PC-3 (cell line): ENCODE measurements at regions of chr13 and their contacts with region 1.

Region 1: DNA sequence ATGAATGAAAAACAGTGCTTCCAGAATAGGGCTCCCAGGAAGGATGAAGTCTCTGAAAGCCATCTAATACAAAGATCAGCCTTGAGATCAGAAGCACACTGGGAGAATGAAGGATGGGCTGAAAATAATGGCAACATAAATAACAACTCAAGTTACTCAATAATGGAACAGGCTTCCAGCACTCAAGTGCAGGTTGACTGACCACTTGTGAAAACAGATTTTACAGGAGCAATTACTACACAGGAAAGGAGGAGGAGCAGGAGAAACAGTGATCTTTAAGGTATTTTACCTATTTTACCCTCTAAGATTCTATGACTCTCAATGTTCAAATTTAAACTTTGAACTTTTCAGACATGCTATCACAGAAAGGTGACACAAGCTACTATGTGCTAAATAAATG is 106.0 kb downstream of the USP12 start:
- DNase-seq: no peak
- ATAC-seq: no peak
- H3K4me3 ChIP-seq: no peak overlapping the region
- H3K27ac ChIP-seq: no peak overlapping the region
- H3K4me1 ChIP-seq: no peaks in the 10 kb centered on the region
- H3K27me3 ChIP-seq: no peaks in the 10 kb centered on the region
- CTCF ChIP-seq: no peak

Region 2: GRCh38 chr13:25901460-25902376 is 1163.9 kb before region 1 on chr13:
- CTCF ChIA-PET with region 1: no interaction called
- POLR2A ChIA-PET with region 1: no interaction called
- intact Hi-C with region 1: no loop called
- DNase-seq: peak; percentile 96
- ATAC-seq: peak; percentile 88
- H3K4me3 ChIP-seq: peak overlapping the region; percentile 15; the same call in 1 of the 2 replicates
- H3K27ac ChIP-seq: peak overlapping the region; percentile 88
- H3K4me1 ChIP-seq: peaks cover 37% of the 10 kb centered on the region
- H3K27me3 ChIP-seq: no peaks in the 10 kb centered on the region
- CTCF ChIP-seq: no peak

Region 3: GRCh38 chr13:26518451-26518959 is 547.1 kb before region 1 on chr13:
- CTCF ChIA-PET with region 1: no interaction called
- POLR2A ChIA-PET with region 1: no interaction called
- intact Hi-C with region 1: no loop called
- DNase-seq: no peak
- ATAC-seq: no peak
- H3K4me3 ChIP-seq: no peak overlapping the region
- H3K27ac ChIP-seq: no peak overlapping the region
- H3K4me1 ChIP-seq: no peaks in the 10 kb centered on the region
- H3K27me3 ChIP-seq: peaks cover 48% of the 10 kb centered on the region
- CTCF ChIP-seq: no peak

Region 4: DNA sequence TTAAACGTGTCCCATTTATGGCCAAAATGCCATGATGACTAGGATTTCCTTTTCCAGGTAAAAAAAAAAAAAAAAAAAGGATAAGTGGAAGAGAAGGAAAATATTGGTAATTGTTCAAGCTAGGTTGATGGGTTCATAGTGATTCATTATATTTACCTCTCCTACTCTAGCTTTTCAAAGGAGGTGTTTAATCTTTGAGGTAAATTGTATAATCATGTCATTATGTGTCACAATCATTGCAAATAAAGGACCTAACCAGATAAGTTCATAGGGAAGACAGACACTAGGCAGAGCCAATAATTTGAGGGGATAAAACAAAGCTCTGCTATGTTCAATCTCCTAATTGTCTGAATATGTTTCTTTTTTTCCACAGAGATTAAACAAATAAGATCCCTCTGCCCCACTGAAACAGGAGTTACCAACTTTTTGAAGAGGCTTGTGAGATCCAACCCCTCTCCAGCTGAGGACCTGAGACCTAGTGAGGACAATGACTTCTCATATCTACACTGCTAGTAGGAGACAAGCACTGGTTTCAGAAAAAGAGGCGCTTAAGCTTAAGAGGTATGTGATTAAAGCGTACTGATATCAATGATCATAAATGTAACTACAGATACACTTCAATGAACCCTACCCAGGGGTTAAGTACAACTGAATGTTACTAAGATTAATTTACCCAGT is 44.6 kb after region 1 on chr13:
- CTCF ChIA-PET with region 1: no interaction called
- POLR2A ChIA-PET with region 1: interaction called, 13 read pairs
- intact Hi-C with region 1: no loop called
- DNase-seq: peak; percentile 64
- ATAC-seq: peak; percentile 74
- H3K4me3 ChIP-seq: no peak overlapping the region
- H3K27ac ChIP-seq: peak overlapping the region; percentile 45
- H3K4me1 ChIP-seq: peaks cover 10% of the 10 kb centered on the region
- H3K27me3 ChIP-seq: no peaks in the 10 kb centered on the region
- CTCF ChIP-seq: no peak

Region 5: GRCh38 chr13:27147530-27148170 is 82.1 kb after region 1 on chr13:
- CTCF ChIA-PET with region 1: no interaction called
- POLR2A ChIA-PET with region 1: no interaction called
- intact Hi-C with region 1: no loop called
- DNase-seq: no peak
- ATAC-seq: no peak
- H3K4me3 ChIP-seq: no peak overlapping the region
- H3K27ac ChIP-seq: no peak overlapping the region
- H3K4me1 ChIP-seq: peaks cover 8% of the 10 kb centered on the region; the same call in 1 of the 2 replicates
- H3K27me3 ChIP-seq: no peaks in the 10 kb centered on the region
- CTCF ChIP-seq: no peak